Activated naive CD8-positive, alpha-beta T cell treated with anti-CD3 and anti-CD28 coated beads, Interleukin-2, amount 10 ng/mL, durations not matched to agents 7 days and 5 days (primary cell): ENCODE measurements at regions of chr5 and their contacts with region 1.

Region 1: DNA sequence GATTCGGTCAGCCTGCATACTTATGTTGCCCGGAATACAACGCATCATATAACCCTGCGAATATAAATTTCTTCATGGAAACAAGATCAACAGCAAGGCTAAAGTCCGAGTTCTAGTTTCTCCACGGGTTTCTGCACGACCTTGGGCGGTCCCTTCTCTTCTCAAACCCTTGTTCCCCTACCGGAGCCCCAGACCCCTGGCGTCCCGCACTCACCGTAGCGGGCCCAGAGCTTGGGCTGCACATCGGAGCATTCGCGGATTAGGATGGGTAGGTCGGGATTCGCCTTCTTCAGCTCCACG is 438 bp downstream of the NDUFA2 start:
- DNase-seq: no peak
- ATAC-seq: peak; percentile 13
- H3K4me3 Mint-ChIP-seq: peak overlapping the region; percentile 97
- H3K27ac Mint-ChIP-seq: peak overlapping the region; percentile 98
- H3K4me1 Mint-ChIP-seq: peaks cover 26% of the 10 kb centered on the region
- H3K27me3 Mint-ChIP-seq: no peaks in the 10 kb centered on the region

Region 2: GRCh38 chr5:140302786-140303639 is 344.0 kb before region 1 on chr5 and contains the start of gene PFDN1:
- POLR2A ChIA-PET with region 1: no interaction called
- DNase-seq: peak; percentile 88
- ATAC-seq: peak; percentile 100
- H3K4me3 Mint-ChIP-seq: peak within 1 kb of the TSS; percentile 98
- H3K27ac Mint-ChIP-seq: peak within 1 kb of the TSS; percentile 95
- H3K4me1 Mint-ChIP-seq: peaks cover 18% of the 10 kb centered on the region
- H3K27me3 Mint-ChIP-seq: peaks cover 11% of the 10 kb centered on the region
- total RNA-seq, gene PFDN1: 47.7 to 48.3 TPM

Region 3: GRCh38 chr5:140401362-140402257 is 245.4 kb before region 1 on chr5 and contains the start of gene ANKHD1:
- POLR2A ChIA-PET with region 1: interaction called, 17 read pairs
- DNase-seq: peak; percentile 93
- ATAC-seq: peak; percentile 85
- H3K4me3 Mint-ChIP-seq: no peak within 1 kb of the TSS
- H3K27ac Mint-ChIP-seq: no peak within 1 kb of the TSS
- H3K4me1 Mint-ChIP-seq: peaks cover 28% of the 10 kb centered on the region
- H3K27me3 Mint-ChIP-seq: no peaks in the 10 kb centered on the region
- total RNA-seq, gene ANKHD1: 148 to 156 TPM

Region 4: GRCh38 chr5:140557136-140557805 is 89.7 kb before region 1 on chr5 and contains the start of gene SRA1:
- POLR2A ChIA-PET with region 1: interaction called, 13 read pairs
- DNase-seq: peak; percentile 90
- ATAC-seq: peak; percentile 94
- H3K4me3 Mint-ChIP-seq: peak within 1 kb of the TSS; percentile 92
- H3K27ac Mint-ChIP-seq: peak within 1 kb of the TSS; percentile 85
- H3K4me1 Mint-ChIP-seq: peaks cover 43% of the 10 kb centered on the region
- H3K27me3 Mint-ChIP-seq: no peaks in the 10 kb centered on the region
- total RNA-seq, gene SRA1: 34.4 to 36.9 TPM

Region 5: DNA sequence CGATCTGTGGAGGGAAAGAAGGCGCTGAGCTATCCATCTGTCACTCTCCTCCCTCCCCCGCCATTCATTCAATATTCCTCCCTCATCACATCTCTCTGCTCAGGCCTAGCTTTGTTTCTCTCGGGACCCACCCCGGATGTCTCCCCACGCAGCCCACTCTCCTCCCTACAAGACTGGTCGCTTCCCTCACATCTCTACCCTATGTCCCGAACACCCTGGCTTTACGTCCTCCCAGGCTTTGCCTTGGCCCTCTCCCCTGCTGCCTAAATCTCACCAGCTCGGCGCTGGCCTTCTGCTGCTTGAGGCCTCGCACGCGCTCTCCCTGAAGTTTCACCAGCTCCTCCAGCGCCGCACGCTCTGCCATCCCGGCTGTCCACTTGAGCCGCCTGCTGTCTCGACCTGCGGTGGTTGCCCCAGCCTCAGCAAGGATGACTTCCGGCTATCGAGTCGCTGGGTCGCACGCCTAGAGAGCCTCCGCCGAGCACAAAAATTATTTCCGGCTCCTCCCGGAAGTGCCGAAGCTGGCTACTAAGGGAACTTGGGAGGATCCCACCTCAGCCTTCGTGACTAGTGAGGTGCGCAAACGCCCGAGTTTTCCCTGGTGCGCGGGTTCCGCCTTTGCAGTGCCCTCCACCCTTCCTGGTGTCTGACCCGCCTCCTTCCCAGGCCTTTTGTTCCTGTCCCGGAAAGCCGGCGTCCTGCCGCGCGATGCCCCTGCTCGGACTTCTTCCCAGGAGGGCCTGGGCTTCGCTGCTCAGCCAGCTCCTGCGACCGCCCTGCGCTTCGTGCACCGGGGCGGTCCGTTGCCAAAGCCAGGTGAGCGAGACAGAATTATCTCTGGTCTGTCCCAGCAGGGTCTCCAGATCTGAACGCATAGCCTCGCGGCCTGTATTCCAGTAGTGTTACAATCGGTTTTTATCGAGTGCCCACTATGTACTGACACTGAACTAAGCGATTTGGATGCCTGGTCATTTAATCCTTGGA is 44.2 kb after region 1 on chr5 and contains the starts of genes HARS1 and HARS2:
- POLR2A ChIA-PET with region 1: interaction called, 24 read pairs
- DNase-seq: peak; percentile 78
- ATAC-seq: peak; percentile 93
- H3K4me3 Mint-ChIP-seq: peak within 1 kb of the TSS; percentile 97
- H3K27ac Mint-ChIP-seq: peak within 1 kb of the TSS; percentile 96
- H3K4me1 Mint-ChIP-seq: peaks cover 35% of the 10 kb centered on the region
- H3K27me3 Mint-ChIP-seq: no peaks in the 10 kb centered on the region
- total RNA-seq, gene HARS1: 77.3 to 81.5 TPM
- total RNA-seq, gene HARS2: 38.7 to 41.7 TPM

Region 6: DNA sequence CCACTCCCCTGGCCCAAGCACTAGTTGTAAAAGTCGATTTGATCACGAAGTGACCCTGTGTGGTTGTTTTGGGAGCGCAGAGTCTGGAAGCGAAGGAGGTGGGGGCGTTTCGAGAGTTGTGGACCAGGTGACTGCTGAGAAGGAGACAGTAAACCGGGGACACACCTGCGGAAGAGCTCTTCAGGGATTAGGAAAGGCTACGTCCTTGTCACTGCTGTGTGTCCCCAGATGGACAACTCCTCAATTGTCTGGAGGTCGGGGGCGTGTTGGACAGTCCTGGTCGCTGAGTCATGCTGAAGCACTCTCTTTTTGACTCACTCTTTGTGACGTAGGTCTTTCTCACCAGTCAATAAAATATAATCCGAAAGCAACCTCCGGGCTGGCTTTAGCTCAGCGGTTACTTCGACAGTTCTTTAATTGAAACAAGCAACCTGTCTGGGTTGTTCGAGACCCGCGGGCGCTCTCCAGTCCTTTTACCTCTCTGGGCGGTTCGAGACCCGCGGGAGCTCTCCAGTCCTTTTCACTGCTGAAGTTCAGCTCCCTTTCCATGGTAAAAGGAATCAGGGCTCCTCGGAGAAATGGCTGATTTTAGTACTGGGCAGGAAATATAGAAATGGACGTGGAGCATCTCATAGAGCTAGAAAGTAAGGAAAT is 64.0 kb after region 1 on chr5:
- POLR2A ChIA-PET with region 1: interaction called, 11 read pairs
- DNase-seq: peak; percentile 75
- ATAC-seq: peak; percentile 91
- H3K4me3 Mint-ChIP-seq: peak overlapping the region; percentile 89
- H3K27ac Mint-ChIP-seq: peak overlapping the region; percentile 95
- H3K4me1 Mint-ChIP-seq: peaks cover 16% of the 10 kb centered on the region
- H3K27me3 Mint-ChIP-seq: peaks cover 6% of the 10 kb centered on the region